Mammary epithelial cell (primary cell): ENCODE measurements at regions of chr21 and their contacts with region 1.

Region 1: GRCh38 chr21:44338971-44339910 is at the start of gene CFAP410:
- DNase-seq: peak; percentile 91
- H3K4me3 ChIP-seq: peak within 1 kb of the TSS; percentile 71 to 91 (median 72)
- H3K27ac ChIP-seq: peak within 1 kb of the TSS; percentile 78
- H3K4me1 ChIP-seq: peaks cover 13% of the 10 kb centered on the region
- H3K27me3 ChIP-seq: no peaks in the 10 kb centered on the region
- CTCF ChIP-seq: no peak
- total RNA-seq, gene CFAP410: 8.3 to 9.6 TPM

Region 2: GRCh38 chr21:44011980-44012527 is 327.2 kb before region 1 on chr21 and contains the start of gene TRAPPC10:
- CTCF ChIA-PET with region 1: no interaction called
- dilution Hi-C with region 1: loop called (anchors 5 kb)
- in situ Hi-C with region 1: no loop called
- intact Hi-C with region 1: no loop called
- DNase-seq: peak; percentile 85
- H3K4me3 ChIP-seq: peak within 1 kb of the TSS; percentile 61 to 84 (median 65)
- H3K27ac ChIP-seq: peak within 1 kb of the TSS; percentile 67
- H3K4me1 ChIP-seq: peaks cover 13% of the 10 kb centered on the region
- H3K27me3 ChIP-seq: no peaks in the 10 kb centered on the region
- CTCF ChIP-seq: no peak
- total RNA-seq, gene TRAPPC10: 36.3 to 37.3 TPM

Region 3: GRCh38 chr21:44255519-44255981 is 83.7 kb before region 1 on chr21:
- CTCF ChIA-PET with region 1: no interaction called
- dilution Hi-C with region 1: no loop called
- in situ Hi-C with region 1: no loop called
- intact Hi-C with region 1: no loop called
- DNase-seq: no peak
- H3K4me3 ChIP-seq: no peak overlapping the region
- H3K27ac ChIP-seq: no peak overlapping the region
- H3K4me1 ChIP-seq: no peaks in the 10 kb centered on the region
- H3K27me3 ChIP-seq: no peaks in the 10 kb centered on the region
- CTCF ChIP-seq: no peak

Region 4: DNA sequence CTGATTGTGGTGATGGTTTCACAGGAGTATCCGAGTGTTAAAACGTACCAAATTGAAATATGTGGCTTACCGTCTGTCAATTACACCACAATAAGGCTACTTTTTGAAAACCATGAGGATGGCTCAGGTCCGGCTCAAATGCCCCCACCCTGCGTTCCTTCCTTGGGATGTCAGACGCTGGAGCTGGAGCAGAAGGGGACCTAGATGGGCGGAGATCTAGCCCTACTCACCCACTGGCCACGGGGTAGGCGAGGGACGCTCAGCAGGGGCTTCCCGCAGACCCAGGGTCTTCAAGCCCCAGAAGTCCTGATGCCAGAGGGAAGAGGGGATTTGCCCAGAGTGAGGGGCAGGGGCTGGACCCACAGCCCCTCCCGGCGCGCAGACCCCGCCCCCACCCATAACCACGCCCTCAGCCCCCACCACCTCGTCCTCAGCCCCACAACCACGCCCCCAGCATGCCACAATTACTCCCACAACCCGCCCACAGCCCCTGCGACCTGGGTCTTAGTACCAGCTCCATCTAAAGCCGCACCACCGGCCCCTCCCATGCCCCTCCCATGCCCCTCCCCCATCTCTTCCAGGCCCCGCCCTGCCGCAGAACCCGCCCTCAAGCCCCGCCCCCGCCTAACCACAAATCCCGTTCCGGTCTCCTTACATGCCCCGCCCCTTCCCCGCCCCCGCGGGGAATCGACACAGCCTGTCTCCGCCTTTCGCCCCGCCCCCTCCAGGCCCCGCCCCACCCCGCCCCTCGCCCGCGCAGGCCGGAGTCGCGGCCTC is 115.7 kb after region 1 on chr21 and contains the start of gene LRRC3:
- CTCF ChIA-PET with region 1: no interaction called
- dilution Hi-C with region 1: no loop called
- in situ Hi-C with region 1: no loop called
- intact Hi-C with region 1: loop called (anchors 10 kb)
- DNase-seq: peak; percentile 65
- H3K4me3 ChIP-seq: peak within 1 kb of the TSS; percentile 56 to 68 (median 58)
- H3K27ac ChIP-seq: no peak within 1 kb of the TSS
- H3K4me1 ChIP-seq: peaks cover 5% of the 10 kb centered on the region
- H3K27me3 ChIP-seq: peaks cover 3% of the 10 kb centered on the region
- CTCF ChIP-seq: no peak
- total RNA-seq, gene LRRC3: 2.3 to 3.5 TPM